ENCODE measurements at regions of chr10 and their contacts with region 1.

Region 1: GRCh38 chr10:88932539-88933256 is 19.9 kb downstream of the ACTA2 start:
- DNase-seq: peak; percentile 71

Region 2: DNA sequence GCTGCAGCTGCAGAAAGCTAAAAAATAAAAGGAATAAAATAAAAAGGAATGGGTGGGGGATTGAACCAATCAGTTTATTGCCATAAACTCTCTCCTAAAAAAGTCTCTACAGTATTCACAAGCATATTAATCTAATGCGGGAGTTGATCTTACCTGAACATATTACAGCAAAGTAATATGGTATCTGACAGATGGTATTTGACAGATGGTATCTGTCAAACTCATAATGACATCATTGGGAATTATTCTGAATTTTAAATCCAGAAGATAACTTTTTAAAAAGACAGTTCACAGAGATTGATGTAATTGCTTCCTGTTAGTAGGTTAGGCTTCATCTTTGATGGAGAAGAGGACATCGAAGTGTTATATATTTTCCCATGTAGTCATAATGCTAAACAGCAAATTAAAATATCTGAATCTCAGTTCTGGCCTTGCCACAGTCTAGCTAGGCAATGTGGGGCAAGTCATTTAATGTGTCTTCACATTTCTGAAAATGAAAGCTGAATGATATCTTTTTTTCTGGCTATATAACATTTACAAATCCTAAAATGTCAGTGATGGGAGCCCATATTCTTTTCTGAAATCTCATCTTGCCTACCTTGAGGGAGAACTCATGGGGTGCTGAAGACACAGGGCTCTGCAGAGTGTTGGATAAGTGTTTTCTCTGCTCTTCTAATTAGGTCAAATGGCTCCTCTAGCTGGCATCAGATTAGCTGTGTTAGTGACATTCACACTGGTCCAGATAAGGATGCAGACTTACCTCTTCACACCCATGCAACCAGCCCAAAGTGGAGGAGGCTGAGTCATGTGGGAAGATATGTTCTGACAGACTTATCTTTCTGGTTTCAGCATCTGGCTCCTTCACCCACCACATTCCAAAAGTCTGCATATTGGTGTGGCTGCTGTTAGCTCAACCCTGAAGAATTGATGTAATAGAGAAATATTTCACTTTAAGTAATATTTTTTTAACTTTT is 132.3 kb before region 1 on chr10:
- CTCF ChIA-PET with region 1: no interaction called
- POLR2A ChIA-PET with region 1: no interaction called
- DNase-seq: no peak

Region 3: GRCh38 chr10:88835096-88835909 is 97.4 kb before region 1 on chr10:
- CTCF ChIA-PET with region 1: interaction called, 112 read pairs
- POLR2A ChIA-PET with region 1: interaction called, 9 read pairs
- DNase-seq: peak; percentile 74

Region 4: DNA sequence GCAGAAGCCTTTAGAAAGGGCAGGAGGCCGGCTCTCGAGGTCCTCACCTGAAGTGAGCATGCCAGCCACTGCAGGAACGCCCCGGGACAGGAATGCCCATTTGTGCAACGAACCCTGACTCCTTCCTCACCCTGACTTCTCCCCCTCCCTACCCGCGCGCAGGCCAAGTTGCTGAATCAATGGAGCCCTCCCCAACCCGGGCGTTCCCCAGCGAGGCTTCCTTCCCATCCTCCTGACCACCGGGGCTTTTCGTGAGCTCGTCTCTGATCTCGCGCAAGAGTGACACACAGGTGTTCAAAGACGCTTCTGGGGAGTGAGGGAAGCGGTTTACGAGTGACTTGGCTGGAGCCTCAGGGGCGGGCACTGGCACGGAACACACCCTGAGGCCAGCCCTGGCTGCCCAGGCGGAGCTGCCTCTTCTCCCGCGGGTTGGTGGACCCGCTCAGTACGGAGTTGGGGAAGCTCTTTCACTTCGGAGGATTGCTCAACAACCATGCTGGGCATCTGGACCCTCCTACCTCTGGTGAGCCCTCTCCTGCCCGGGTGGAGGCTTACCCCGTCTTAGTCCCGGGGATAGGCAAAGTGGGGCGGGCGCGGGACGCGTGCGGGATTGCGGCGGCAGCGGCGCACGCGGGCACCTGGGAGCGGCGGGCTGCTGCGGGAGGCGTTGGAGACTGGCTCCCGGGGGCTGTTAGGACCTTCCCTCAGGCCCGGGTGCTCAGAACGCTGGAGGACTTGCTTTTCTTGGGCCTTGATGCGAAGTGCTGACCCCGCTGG is 57.9 kb after region 1 on chr10 and contains the start of gene FAS:
- CTCF ChIA-PET with region 1: interaction called, 24 read pairs
- POLR2A ChIA-PET with region 1: interaction called, 4 read pairs
- DNase-seq: peak; percentile 32

Region 5: DNA sequence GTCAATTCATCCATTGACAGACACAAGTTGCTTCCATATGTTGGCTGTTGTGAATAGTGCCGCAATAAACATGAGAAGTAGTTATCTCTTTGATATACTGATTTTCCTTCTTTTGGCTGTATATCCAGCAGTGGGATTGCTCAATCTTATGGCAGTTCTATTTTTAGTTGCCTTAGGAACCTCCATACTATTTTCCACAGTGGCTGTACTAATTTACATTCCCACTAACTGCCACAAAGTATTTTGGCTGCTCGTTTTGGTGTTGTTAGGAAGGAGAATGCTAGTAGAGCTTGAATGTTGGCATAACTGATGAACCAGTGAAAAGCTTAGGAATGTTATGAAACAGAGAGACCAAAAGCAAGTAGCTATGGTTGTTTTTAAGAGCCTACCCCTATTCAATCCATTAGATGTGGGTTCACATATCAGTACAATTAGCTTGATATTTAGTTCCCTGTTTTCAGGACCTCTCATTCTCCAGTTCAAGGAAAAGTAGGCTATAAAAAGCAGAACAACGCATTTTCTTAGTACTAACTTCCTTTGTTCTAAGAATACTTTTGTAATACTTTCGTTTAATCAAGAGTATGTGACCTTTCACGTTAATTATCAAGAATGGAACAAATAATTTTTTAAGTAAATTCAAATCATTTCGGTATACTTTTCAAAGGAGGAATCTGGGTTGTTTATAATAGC is 158.2 kb after region 1 on chr10:
- CTCF ChIA-PET with region 1: no interaction called
- POLR2A ChIA-PET with region 1: no interaction called
- DNase-seq: no peak

Region 6: DNA sequence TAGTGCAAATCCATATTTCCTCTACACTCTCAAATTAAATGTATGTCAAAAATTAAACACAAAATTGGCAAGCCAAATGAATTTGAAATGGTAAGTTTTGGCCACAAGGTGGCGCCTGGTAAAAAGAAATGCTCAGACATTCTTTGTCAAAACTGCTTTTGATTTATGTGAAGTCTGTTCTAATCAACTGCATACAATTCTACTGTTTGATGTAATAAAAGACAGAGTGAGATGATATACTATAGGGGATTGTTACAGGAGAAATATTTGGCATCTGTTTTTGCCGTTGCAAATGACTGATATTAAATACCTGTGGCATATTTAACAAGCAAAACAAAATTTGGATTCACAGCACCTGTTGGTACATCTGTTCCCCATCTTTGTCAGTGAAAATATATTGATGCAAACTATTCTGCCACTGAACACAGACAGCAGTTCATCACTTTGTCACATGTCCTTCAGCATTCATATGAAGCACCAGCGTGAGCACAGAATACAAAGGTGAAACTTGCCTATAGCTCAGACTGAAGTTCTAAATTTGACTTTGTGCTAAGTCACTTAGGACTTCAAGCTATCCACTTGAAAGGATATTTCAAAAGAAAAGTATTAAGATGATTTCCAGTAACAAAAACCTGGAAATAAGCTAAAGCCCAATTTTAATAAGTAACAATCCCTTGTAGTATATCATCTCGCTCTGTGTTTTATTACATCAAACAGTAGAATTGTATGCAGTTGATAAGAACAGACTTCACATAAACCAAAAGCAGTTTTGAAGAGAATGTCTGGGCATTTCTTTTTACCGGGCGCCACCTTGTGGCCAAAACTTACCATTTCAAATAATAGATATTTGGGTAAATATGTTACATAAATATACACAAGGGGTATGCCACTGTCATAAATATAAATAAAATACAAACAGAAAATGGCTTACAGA is 284.6 kb after region 1 on chr10:
- CTCF ChIA-PET with region 1: interaction called, 15 read pairs
- POLR2A ChIA-PET with region 1: no interaction called
- DNase-seq: peak; percentile 23